OCI-LY7 (cell line): ENCODE measurements at regions of chr17 and their contacts with region 1.

Region 1: DNA sequence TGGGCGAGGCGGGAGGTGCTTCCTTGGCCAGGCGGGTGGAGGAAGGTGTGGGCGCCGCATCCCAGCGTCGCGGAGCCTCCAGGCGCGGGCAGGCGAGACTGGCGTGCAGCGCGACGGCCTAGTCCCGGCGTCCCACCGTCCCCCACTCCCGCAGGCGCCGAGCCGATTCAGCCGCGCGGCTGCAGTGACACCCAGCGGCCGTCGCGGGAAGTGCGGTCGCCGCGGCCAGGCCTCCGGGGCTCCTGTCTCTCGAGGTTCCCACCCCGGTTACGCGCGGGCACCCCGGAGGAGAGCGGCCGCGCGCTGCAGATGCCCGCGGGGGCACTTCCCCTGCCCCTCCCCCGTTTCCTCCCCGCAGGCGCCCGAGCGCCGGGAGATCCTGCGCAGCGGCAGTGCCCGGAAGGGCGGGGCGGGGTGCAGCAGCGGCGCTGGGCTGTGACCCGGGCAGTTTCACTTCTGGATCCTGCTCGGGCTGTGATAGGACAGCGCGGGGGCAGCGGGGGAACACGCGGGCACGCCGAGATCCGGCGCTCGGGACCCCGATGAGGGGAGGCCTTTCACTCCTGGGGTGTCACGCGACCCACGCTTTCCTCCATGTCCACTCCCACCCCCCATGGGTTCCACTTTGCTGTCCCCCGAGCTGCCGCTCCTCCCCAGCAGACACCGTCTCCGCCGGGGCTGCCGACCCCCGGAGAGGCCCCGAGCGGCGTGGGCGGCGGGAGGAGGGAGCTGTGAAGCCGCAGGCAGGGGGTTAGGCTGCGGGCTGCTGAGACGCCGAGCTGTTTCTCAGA is 16.6 kb downstream of the GRB7 start:
- DNase-seq: peak; percentile 99
- H3K4me3 ChIP-seq: peak overlapping the region; percentile 67
- H3K27ac ChIP-seq: peak overlapping the region; percentile 99
- H3K4me1 ChIP-seq: peaks cover 73% of the 10 kb centered on the region
- CTCF ChIP-seq: peak; percentile 76

Region 2: GRCh38 chr17:39553341-39553945 is 200.9 kb before region 1 on chr17:
- CTCF ChIA-PET with region 1: no interaction called
- POLR2A ChIA-PET with region 1: no interaction called
- intact Hi-C with region 1: no loop called
- DNase-seq: no peak
- H3K4me3 ChIP-seq: no peak overlapping the region
- H3K27ac ChIP-seq: no peak overlapping the region
- H3K4me1 ChIP-seq: peaks cover 8% of the 10 kb centered on the region
- CTCF ChIP-seq: no peak

Region 3: GRCh38 chr17:39636927-39637736 is 117.2 kb before region 1 on chr17 and contains the start of gene STARD3:
- CTCF ChIA-PET with region 1: no interaction called
- POLR2A ChIA-PET with region 1: no interaction called
- intact Hi-C with region 1: loop called (anchors 1 kb)
- DNase-seq: peak; percentile 93
- H3K4me3 ChIP-seq: peak within 1 kb of the TSS; percentile 77
- H3K27ac ChIP-seq: peak within 1 kb of the TSS; percentile 53
- H3K4me1 ChIP-seq: peaks cover 34% of the 10 kb centered on the region
- CTCF ChIP-seq: no peak
- total RNA-seq, gene STARD3: 33.7 and 36.5 TPM in 2 replicates

Region 4: GRCh38 chr17:39730095-39730921 is 24.0 kb before region 1 on chr17 and contains the start of gene MIEN1:
- CTCF ChIA-PET with region 1: no interaction called
- POLR2A ChIA-PET with region 1: interaction called, 3 read pairs
- intact Hi-C with region 1: loop called (anchors 1 kb)
- DNase-seq: peak; percentile 91
- H3K4me3 ChIP-seq: peak within 1 kb of the TSS; percentile 75
- H3K27ac ChIP-seq: peak within 1 kb of the TSS; percentile 36
- H3K4me1 ChIP-seq: peaks cover 9% of the 10 kb centered on the region
- CTCF ChIP-seq: peak; percentile 90
- total RNA-seq, gene MIEN1: 77.3 and 89.9 TPM in 2 replicates

Region 5: GRCh38 chr17:39794249-39794970 is 40.1 kb after region 1 on chr17:
- CTCF ChIA-PET with region 1: no interaction called
- POLR2A ChIA-PET with region 1: interaction called, 17 read pairs
- intact Hi-C with region 1: loop called (anchors 1 kb)
- DNase-seq: peak; percentile 97
- H3K4me3 ChIP-seq: peak overlapping the region; percentile 54
- H3K27ac ChIP-seq: peak overlapping the region; percentile 99
- H3K4me1 ChIP-seq: peaks cover 96% of the 10 kb centered on the region
- CTCF ChIP-seq: no peak

Region 6: DNA sequence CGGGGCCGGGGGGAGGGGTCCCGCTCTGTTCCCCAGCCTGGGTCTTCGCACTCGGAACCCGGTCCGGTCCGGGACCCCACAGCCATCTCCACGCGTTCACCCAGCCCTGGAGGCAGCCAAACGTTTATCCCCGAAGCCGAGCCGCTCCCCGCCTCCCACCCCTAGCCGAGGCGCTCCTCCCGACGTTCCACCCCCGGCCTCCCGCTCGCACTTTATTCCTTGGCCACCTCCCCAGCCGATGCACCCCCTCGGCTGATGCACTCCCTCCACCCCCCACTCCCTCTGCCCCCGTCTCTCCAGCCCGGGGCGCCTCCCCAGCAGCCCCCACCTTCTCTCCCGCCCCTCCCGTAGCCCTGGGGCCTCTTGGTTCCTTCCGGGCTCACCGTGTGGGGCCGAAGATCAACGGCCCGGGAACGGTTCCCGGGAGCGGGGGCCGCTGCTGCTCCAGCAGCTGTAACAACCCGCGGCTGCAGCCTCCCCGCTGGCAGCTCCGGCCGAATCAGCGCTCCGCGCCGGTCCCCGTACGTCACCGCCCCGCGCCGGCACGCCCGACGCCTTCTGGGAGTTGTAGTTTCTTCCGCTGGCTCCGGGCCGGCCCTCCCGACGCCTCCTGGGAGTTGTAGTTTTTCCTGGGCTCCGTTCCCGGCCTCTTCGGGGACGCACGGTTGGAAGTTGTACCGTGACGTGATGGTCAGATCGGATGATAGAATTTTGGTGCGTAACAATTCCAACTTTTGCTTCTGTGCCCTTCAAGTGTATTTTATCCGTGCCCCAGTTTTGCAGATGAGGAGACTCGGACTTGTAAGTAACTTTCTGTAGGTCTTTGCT is 173.0 kb after region 1 on chr17 and contains the starts of genes LRRC3C and ORMDL3:
- CTCF ChIA-PET with region 1: no interaction called
- POLR2A ChIA-PET with region 1: no interaction called
- intact Hi-C with region 1: loop called (anchors 1 kb)
- DNase-seq: peak; percentile 93
- H3K4me3 ChIP-seq: peak within 1 kb of the TSS; percentile 91
- H3K27ac ChIP-seq: peak within 1 kb of the TSS; percentile 65
- H3K4me1 ChIP-seq: peaks cover 40% of the 10 kb centered on the region
- CTCF ChIP-seq: no peak
- total RNA-seq, gene LRRC3C: not detected in 2 replicates
- total RNA-seq, gene ORMDL3: 62.2 and 62.6 TPM in 2 replicates

Region 7: DNA sequence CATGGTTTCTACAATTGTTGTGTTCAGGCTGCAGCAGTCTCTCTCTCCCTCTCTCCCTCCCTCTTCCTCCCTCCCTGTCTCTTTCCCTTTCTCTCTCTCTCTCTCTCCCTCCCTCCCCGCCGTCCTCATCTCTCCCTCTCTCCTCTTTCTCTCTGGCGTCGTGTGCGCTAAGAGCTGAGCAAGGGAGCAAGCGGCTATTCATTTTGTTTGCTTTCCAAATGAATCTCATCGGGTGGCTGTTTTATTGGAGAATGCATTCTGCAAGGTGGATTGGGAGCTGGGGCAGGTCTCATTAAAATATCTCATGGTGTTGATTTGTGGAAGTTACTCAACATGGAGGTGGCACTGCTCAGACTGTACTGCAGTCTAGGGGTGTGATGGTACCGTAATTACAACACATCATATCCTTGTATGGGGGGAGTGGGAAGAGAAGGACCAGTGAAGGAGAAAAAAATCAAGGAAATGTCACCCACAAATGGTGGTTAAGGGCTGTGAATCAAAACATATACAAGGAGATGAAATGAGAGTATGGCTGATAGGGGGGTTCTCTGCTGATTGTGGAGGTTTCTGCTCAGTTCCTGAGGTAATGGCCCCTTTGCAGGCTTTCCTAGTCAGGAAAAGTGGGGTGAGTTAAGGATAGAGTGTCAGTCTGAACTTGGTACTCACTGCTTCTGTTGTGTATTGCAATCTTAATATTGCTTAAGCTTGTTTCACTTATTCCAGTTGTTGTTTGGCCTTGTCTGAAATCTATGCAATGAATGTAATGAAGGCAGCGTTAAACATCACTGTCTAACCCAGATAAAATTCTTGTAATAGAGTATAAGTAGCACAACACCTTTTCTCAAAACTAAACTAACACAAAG is 370.2 kb after region 1 on chr17:
- CTCF ChIA-PET with region 1: no interaction called
- POLR2A ChIA-PET with region 1: no interaction called
- intact Hi-C with region 1: no loop called
- DNase-seq: no peak
- H3K4me3 ChIP-seq: peak overlapping the region; percentile 88
- H3K27ac ChIP-seq: peak overlapping the region; percentile 64
- H3K4me1 ChIP-seq: peaks cover 24% of the 10 kb centered on the region
- CTCF ChIP-seq: no peak